GM12878 (cell line): ENCODE measurements at regions of chr7 and their contacts with region 1.

Region 1: GRCh38 chr7:117715784-117716445 is 157.3 kb downstream of the CTTNBP2 start:
- DNase-seq: no peak
- ATAC-seq: peak; percentile 95
- H3K4me3 ChIP-seq: no peak overlapping the region
- H3K27ac ChIP-seq: no peak overlapping the region
- H3K4me1 ChIP-seq: no peaks in the 10 kb centered on the region
- H3K27me3 ChIP-seq: no peaks in the 10 kb centered on the region
- CTCF ChIP-seq: peak; percentile 59 to 74 (median 68)
- EP300 ChIP-seq: no peak
- POLR2A ChIP-seq: no peak
- RAD21 ChIP-seq: peak; percentile 86

Region 2: DNA sequence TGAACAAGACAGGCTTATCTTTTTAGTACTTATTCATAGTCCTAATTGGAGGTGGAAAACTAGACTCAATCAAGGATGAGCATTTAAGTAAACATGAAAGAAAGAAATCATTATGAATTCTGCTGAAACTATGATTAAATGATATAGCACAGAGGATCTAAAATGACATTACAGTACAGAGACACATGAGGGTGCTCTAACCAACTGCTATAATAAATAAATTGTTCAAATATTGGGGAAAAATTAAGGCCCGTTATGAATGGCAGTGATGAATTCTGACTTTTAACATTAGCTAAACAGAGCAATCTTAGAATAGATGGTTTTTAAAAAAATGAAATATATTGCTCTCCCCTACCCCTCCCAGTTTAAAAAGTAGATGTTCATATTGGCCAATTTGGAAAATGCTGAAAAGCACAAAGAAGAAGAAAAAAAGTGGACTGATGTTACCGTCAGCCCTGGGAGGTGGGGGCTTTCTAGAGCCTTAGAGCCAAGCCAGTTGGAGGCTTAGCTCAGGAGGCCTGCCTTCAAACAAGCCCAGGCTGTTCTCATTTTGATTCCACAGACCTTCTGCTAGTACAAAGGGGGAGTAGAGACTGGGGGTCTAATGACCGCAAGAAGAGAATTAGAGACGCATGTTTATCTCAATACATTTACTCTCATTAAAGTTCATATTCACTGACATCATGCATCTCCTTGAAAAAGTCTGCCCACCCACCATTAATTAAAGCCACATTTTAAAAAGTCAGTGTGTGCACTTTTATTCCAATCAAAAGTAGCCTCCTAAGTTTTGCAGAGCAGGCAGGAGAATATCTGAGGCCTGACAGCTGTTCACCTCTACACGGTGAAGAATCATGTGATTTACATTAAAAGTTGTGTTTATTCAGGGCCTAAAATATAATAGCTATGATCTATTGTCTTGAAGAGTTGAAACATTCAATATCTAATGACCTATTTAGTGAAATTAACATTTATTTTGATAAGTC is 403.0 kb before region 1 on chr7:
- CTCF ChIA-PET with region 1: interaction called, 11 read pairs
- POLR2A ChIA-PET with region 1: no interaction called
- RAD21 ChIA-PET with region 1: interaction called, 3 read pairs
- SMC1A ChIA-PET with region 1: interaction called, 4 read pairs
- in situ Hi-C with region 1: no loop called
- intact Hi-C with region 1: no loop called
- DNase-seq: no peak
- ATAC-seq: peak; percentile 48; the same call in 2 of the 3 replicates
- H3K4me3 ChIP-seq: no peak overlapping the region
- H3K27ac ChIP-seq: no peak overlapping the region
- H3K4me1 ChIP-seq: no peaks in the 10 kb centered on the region
- H3K27me3 ChIP-seq: no peaks in the 10 kb centered on the region
- CTCF ChIP-seq: peak in 1 of 3 experiments; percentile 47; a peak in 1 of 6 replicates
- EP300 ChIP-seq: no peak
- POLR2A ChIP-seq: no peak
- RAD21 ChIP-seq: peak; percentile 56

Region 3: DNA sequence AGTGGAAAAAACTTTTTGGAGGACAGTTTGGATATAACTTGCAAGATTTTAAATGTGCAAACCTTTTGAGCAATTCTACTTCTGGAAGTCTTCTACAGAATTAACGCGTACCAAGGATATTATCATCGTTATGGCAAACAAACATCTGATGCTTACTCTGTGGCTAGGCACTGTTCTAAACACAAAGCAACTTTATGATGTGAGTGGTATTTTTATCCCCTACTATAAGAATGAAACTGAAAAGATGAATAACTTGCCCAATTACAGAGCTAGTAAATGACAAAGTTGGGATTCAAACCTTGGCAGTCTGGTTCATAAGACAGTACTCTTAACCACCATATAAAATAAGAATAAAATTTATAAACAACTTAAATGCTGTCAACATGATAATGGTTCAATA is 304.4 kb before region 1 on chr7:
- CTCF ChIA-PET with region 1: interaction called, 3 read pairs
- POLR2A ChIA-PET with region 1: no interaction called
- RAD21 ChIA-PET with region 1: interaction called, 13 read pairs
- SMC1A ChIA-PET with region 1: interaction called, 4 read pairs
- in situ Hi-C with region 1: no loop called
- intact Hi-C with region 1: no loop called
- DNase-seq: no peak
- ATAC-seq: peak; percentile 93
- H3K4me3 ChIP-seq: no peak overlapping the region
- H3K27ac ChIP-seq: no peak overlapping the region
- H3K4me1 ChIP-seq: no peaks in the 10 kb centered on the region
- H3K27me3 ChIP-seq: no peaks in the 10 kb centered on the region
- CTCF ChIP-seq: no peak
- EP300 ChIP-seq: peak in 1 of 2 experiments; percentile 67; a peak in 1 of 4 replicates
- POLR2A ChIP-seq: no peak
- RAD21 ChIP-seq: no peak

Region 4: GRCh38 chr7:117479225-117480054 is 236.5 kb before region 1 on chr7 and contains the start of gene CFTR:
- CTCF ChIA-PET with region 1: interaction called, 12 read pairs
- POLR2A ChIA-PET with region 1: no interaction called
- RAD21 ChIA-PET with region 1: interaction called, 5 read pairs
- SMC1A ChIA-PET with region 1: interaction called, 7 read pairs
- in situ Hi-C with region 1: no loop called
- intact Hi-C with region 1: no loop called
- DNase-seq: no peak
- ATAC-seq: peak; percentile 42
- H3K4me3 ChIP-seq: no peak within 1 kb of the TSS
- H3K27ac ChIP-seq: no peak within 1 kb of the TSS
- H3K4me1 ChIP-seq: no peaks in the 10 kb centered on the region
- H3K27me3 ChIP-seq: peaks cover 0 to 6% of the 10 kb centered on the region in 2 experiments; a peak in 2 of 4 replicates
- CTCF ChIP-seq: no peak
- EP300 ChIP-seq: no peak
- POLR2A ChIP-seq: no peak
- RAD21 ChIP-seq: no peak
- polyA plus RNA-seq, gene CFTR: 0.02 TPM in 1 of 2 experiments, not detected in the other

Region 5: GRCh38 chr7:117731455-117731854 is 15.5 kb after region 1 on chr7:
- CTCF ChIA-PET with region 1: interaction called, 35 read pairs
- POLR2A ChIA-PET with region 1: interaction called, 3 read pairs
- RAD21 ChIA-PET with region 1: interaction called, 18 read pairs
- SMC1A ChIA-PET with region 1: interaction called, 57 read pairs
- in situ Hi-C with region 1: no loop called
- intact Hi-C with region 1: no loop called
- DNase-seq: peak; percentile 66
- ATAC-seq: peak; percentile 86
- H3K4me3 ChIP-seq: no peak overlapping the region
- H3K27ac ChIP-seq: no peak overlapping the region
- H3K4me1 ChIP-seq: no peaks in the 10 kb centered on the region
- H3K27me3 ChIP-seq: no peaks in the 10 kb centered on the region; a peak in 1 of 4 replicates
- CTCF ChIP-seq: no peak
- EP300 ChIP-seq: peak; percentile 54 to 80; a peak in 3 of 4 replicates
- POLR2A ChIP-seq: no peak
- RAD21 ChIP-seq: no peak

Region 6: DNA sequence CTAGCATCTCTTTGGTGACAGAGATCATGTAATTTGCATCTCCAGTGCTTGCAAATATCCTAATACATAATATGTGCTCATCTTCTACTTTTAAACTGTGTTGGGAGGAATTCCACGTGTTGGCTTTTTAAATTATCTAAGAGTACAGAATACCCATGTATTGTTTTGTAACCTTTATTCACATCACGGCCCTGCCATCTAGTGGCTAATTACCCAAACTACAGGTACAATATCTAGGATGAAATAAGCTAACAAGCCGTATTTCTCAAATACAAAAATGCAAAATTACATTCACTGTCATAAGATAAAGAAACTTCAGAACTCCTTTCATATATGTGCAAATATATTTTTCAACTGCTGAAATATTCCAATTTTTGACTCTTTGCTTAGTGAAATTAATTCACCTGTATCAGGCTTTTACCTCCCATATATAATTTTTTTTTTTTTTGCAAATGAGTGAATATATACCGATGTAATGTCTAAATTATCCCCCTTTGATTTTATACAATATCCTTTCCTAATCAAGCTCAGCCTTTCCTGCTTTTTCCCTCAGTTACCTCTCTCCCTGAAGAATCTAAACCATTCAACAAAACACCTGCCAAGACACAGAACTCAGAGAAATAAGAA is 437.7 kb after region 1 on chr7:
- CTCF ChIA-PET with region 1: interaction called, 13 read pairs
- POLR2A ChIA-PET with region 1: no interaction called
- RAD21 ChIA-PET with region 1: interaction called, 11 read pairs
- SMC1A ChIA-PET with region 1: interaction called, 10 read pairs
- in situ Hi-C with region 1: no loop called
- intact Hi-C with region 1: no loop called
- DNase-seq: no peak
- ATAC-seq: peak; percentile 66
- H3K4me3 ChIP-seq: no peak overlapping the region
- H3K27ac ChIP-seq: no peak overlapping the region
- H3K4me1 ChIP-seq: no peaks in the 10 kb centered on the region
- H3K27me3 ChIP-seq: no peaks in the 10 kb centered on the region
- CTCF ChIP-seq: peak; percentile 55 to 68 (median 61); a peak in 5 of 6 replicates
- EP300 ChIP-seq: no peak
- POLR2A ChIP-seq: no peak
- RAD21 ChIP-seq: peak; percentile 72